ENCODE measurements at regions of chr4 and their contacts with region 1.

Region 1: GRCh38 chr4:119041951-119042560 is 93.6 kb upstream of the MYOZ2 start:
- DNase-seq: peak; percentile 15 to 68 (median 47)
- H3K4me3 ChIP-seq: no peak overlapping the region
- H3K4me3 Mint-ChIP-seq: no peak overlapping the region
- H3K27ac ChIP-seq: no peak overlapping the region
- H3K27ac Mint-ChIP-seq: no peak overlapping the region
- H3K4me1 ChIP-seq: peaks cover 4% of the 10 kb centered on the region
- H3K4me1 Mint-ChIP-seq: peaks cover 0 to 7% (median 2%) of the 10 kb centered on the region in 3 donors
- H3K27me3 ChIP-seq: no peaks in the 10 kb centered on the region
- H3K27me3 Mint-ChIP-seq: peaks cover 0 to 12% of the 10 kb centered on the region in 2 donors

Region 2: GRCh38 chr4:118883861-118884260 is 158.2 kb before region 1 on chr4:
- CTCF ChIA-PET with region 1: no interaction called
- POLR2A ChIA-PET with region 1: no interaction called
- DNase-seq: no peak
- H3K4me3 ChIP-seq: no peak overlapping the region
- H3K4me3 Mint-ChIP-seq: no peak overlapping the region
- H3K27ac ChIP-seq: no peak overlapping the region
- H3K27ac Mint-ChIP-seq: peak overlapping the region in 1 of 8 donors; percentile 15
- H3K4me1 ChIP-seq: peaks cover 4% of the 10 kb centered on the region
- H3K4me1 Mint-ChIP-seq: peaks cover 4 to 10% (median 8%) of the 10 kb centered on the region in 3 donors
- H3K27me3 ChIP-seq: peaks cover 6% of the 10 kb centered on the region
- H3K27me3 Mint-ChIP-seq: peaks cover 17 to 36% of the 10 kb centered on the region in 2 donors

Region 3: DNA sequence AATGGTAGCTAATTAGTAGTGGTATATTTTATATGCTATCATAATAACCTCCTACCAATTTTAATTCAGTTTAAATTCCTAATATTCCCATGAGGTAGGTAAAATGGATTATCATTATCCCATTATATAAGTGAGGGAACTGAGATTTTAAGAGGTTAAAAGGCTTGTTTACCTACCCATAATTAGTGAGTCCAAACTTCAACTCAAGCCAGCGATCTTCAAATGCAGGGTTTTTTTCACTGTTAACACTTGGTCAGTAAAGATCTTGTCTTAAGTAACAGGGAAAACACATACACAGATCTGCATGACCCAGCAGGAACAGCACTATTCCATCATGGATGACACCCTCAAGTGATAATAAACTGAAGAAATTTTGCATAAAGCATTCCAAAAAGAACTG is 248.5 kb after region 1 on chr4:
- CTCF ChIA-PET with region 1: interaction called, 28 read pairs
- POLR2A ChIA-PET with region 1: no interaction called
- DNase-seq: no peak
- H3K4me3 ChIP-seq: no peak overlapping the region
- H3K4me3 Mint-ChIP-seq: no peak overlapping the region
- H3K27ac ChIP-seq: no peak overlapping the region
- H3K27ac Mint-ChIP-seq: no peak overlapping the region
- H3K4me1 ChIP-seq: no peaks in the 10 kb centered on the region
- H3K4me1 Mint-ChIP-seq: peaks cover 2 to 6% (median 4%) of the 10 kb centered on the region in 3 donors
- H3K27me3 ChIP-seq: no peaks in the 10 kb centered on the region
- H3K27me3 Mint-ChIP-seq: no peaks in the 10 kb centered on the region

Region 4: DNA sequence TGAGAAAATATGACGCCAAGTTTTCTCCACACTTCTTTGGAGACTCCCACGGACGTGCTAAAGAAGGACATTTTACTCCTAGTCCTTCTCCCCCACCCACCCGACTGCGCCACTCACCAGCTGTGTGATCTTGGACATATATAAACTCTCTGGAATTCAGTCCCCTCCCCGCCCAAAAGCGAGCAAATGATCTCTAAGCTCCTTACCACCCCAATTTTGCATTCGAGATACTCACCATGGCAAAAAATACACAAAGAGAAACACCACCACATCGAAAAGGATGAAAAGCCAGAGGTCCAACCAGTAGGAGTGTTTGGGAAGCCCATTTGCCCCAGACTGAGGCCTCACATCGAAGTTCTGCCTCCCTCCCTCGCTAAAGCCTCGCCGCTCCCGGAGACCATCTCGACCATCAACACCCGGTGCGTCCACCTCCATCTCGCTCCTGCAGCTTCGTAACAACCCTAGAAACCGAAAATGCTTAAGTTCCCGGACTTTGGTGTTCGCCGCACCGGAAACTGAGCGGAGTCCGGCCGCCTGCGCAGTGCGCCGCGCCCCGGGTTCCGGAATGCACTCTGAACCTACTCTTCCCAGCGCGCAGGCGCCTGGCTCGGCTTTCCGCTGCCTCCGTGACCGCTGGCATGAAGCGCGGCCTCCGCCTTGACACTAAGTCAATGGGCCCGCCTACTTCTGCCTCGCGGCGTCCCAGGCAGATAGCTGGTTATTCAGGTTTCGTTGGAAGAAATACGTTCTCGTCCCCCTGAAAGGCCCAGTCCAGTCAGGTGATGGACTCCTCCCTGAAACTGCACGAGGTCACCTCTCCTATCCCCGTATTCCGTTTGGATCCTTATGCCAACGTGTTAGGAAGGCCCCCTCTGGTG is 258.3 kb after region 1 on chr4:
- CTCF ChIA-PET with region 1: interaction called, 25 read pairs
- POLR2A ChIA-PET with region 1: interaction called, 3 read pairs
- DNase-seq: peak; percentile 84 to 92 (median 89)
- H3K4me3 ChIP-seq: peak overlapping the region; percentile 99
- H3K4me3 Mint-ChIP-seq: peak overlapping the region; percentile 94 to 100 (median 98)
- H3K27ac ChIP-seq: peak overlapping the region; percentile 97
- H3K27ac Mint-ChIP-seq: peak overlapping the region; percentile 96 to 100 (median 97)
- H3K4me1 ChIP-seq: peaks cover 19% of the 10 kb centered on the region
- H3K4me1 Mint-ChIP-seq: peaks cover 34 to 48% (median 40%) of the 10 kb centered on the region in 3 donors
- H3K27me3 ChIP-seq: no peaks in the 10 kb centered on the region
- H3K27me3 Mint-ChIP-seq: peaks cover 0 to 14% of the 10 kb centered on the region in 2 donors

Measured in CD8-positive, alpha-beta memory T cell (primary cell).